ENCODE measurements at regions of chr20 and their contacts with region 1.

Region 1: GRCh38 chr20:19784511-19785172 is 26.6 kb downstream of the RIN2 start:
- DNase-seq: peak in 5 of 10 donors; percentile 44 to 88 (median 50)

Region 2: GRCh38 chr20:19692685-19693119 is 91.9 kb before region 1 on chr20:
- intact Hi-C with region 1: loop called (anchors 5 kb)
- DNase-seq: peak; percentile 30 to 92 (median 68)

Region 3: GRCh38 chr20:19830211-19830785 is 45.7 kb after region 1 on chr20:
- intact Hi-C with region 1: loop called (anchors 5 kb)
- DNase-seq: no peak

Region 4: GRCh38 chr20:19889011-19889953 is 104.6 kb after region 1 on chr20:
- intact Hi-C with region 1: loop called (anchors 1 kb)
- DNase-seq: peak; percentile 21 to 93 (median 40)

Measured in posterior cingulate gyrus (tissue), 11 donors.